Activated T-helper 1 cell treated with anti-CD3 and anti-CD28 coated beads, Interleukin-12 subunit alpha, Interleukin-12 subunit beta, Interleukin-2, Interleukin-4 antibody, amounts not matched to agents 30 ng/mL and 10 ng/mL and 1 ng/mL, durations not matched to agents 14 hours and 24 hours and 36 hours (primary cell): ENCODE measurements at regions of chr3 and their contacts with region 1.

Region 1: DNA sequence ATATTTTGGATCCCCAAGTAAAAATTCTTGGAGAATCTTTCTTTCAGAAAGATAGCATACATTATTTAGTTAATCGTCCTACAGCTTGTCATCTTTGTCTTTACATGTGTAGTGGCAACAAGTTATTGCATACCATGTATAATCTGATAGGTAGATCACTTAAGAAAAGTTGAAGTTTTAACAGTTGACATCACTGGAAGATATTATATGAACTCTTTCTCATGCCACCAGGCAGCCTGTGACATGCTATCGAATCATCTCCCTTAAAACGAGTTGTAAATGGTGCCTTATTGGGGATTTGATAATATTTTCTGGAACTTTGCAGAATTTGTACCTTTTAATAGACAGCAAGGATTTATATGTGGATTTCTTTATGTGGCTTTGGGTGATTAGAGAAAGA is 8.7 kb downstream of the U2SURP start:
- DNase-seq: no peak
- H3K4me3 Mint-ChIP-seq: no peak overlapping the region
- H3K27ac Mint-ChIP-seq: peak overlapping the region; percentile 10
- H3K4me1 Mint-ChIP-seq: peaks cover 82% of the 10 kb centered on the region
- H3K27me3 Mint-ChIP-seq: no peaks in the 10 kb centered on the region

Region 2: DNA sequence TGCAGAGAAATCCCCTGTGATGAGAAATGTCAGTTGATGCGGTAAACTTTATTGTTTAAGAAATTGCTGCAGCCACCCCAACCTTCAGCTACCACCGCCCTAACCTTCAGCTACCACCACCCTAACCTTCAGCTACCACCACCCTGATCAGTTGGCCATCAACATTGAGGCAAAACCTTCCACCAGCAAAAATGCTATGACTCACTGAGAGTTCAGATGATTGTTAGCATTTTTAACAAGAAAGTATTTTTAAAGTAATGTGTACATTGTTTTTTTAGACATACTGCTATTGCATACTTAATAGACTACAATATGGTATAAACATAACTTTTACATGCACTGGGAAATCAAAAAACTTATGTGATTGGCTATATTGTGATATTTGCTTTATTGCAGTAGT is 21.3 kb after region 1 on chr3:
- intact Hi-C with region 1: loop called (anchors 2 kb)
- DNase-seq: no peak
- H3K4me3 Mint-ChIP-seq: no peak overlapping the region
- H3K27ac Mint-ChIP-seq: no peak overlapping the region
- H3K4me1 Mint-ChIP-seq: peaks cover 12% of the 10 kb centered on the region
- H3K27me3 Mint-ChIP-seq: no peaks in the 10 kb centered on the region